ENCODE measurements at regions of chr22 and their contacts with region 1.

Region 1: DNA sequence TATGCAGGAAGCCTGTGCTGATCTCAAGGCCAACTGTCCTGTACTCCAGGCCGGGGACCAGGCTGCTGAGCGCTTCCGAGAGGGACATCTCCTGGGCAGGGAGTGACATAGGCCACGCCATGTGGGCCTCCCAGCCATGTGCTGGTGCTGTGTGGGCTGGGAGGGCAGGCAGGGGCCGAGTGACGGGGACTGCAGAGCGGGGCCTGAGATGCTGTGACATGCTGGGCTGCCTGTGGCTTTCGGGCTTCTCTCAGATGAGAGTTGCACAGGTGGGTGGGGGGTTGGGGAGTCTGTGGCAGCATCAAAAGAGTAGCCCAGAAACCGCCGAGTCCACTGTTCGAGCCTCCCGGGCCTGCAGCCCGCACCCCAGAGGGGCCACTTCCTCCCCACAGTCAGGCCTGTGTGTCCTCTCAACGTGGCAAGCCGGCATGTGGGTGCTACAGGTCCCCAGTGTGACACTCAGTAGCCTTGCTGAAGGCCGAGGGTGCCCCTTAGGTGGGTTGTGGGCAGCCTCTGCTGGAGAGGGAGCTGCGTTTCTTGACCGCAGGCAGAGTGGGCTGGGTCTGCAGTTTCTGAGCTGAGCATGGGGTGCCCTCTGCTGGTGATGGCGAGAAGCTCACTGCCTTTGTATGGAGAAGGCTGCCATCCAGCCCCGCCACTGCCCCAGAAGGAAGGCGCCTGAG is 101.2 kb downstream of the BCR start:
- DNase-seq: peak; percentile 88 to 93
- H3K4me3 ChIP-seq: no peak overlapping the region
- H3K27ac ChIP-seq: peak overlapping the region; percentile 42 to 87 (median 80)
- H3K4me1 ChIP-seq: peaks cover 30 to 67% (median 49%) of the 10 kb centered on the region in 4 donors
- H3K27me3 ChIP-seq: no peaks in the 10 kb centered on the region
- CTCF ChIP-seq: peak in 6 of 7 experiments; percentile 9 to 97 (median 92)
- EP300 ChIP-seq: no peak
- POLR2A ChIP-seq: no peak

Region 2: GRCh38 chr22:23178512-23179254 is 102.9 kb before region 1 on chr22:
- intact Hi-C with region 1: loop called (anchors 5 kb)
- DNase-seq: peak; percentile 75 to 89
- H3K4me3 ChIP-seq: no peak overlapping the region
- H3K27ac ChIP-seq: peak overlapping the region in 4 of 5 donors; percentile 81 to 90 (median 86)
- H3K4me1 ChIP-seq: peaks cover 38 to 59% (median 53%) of the 10 kb centered on the region in 4 donors
- H3K27me3 ChIP-seq: no peaks in the 10 kb centered on the region
- CTCF ChIP-seq: peak in 6 of 7 experiments; percentile 80 to 97 (median 94)
- EP300 ChIP-seq: no peak
- POLR2A ChIP-seq: no peak

Region 3: DNA sequence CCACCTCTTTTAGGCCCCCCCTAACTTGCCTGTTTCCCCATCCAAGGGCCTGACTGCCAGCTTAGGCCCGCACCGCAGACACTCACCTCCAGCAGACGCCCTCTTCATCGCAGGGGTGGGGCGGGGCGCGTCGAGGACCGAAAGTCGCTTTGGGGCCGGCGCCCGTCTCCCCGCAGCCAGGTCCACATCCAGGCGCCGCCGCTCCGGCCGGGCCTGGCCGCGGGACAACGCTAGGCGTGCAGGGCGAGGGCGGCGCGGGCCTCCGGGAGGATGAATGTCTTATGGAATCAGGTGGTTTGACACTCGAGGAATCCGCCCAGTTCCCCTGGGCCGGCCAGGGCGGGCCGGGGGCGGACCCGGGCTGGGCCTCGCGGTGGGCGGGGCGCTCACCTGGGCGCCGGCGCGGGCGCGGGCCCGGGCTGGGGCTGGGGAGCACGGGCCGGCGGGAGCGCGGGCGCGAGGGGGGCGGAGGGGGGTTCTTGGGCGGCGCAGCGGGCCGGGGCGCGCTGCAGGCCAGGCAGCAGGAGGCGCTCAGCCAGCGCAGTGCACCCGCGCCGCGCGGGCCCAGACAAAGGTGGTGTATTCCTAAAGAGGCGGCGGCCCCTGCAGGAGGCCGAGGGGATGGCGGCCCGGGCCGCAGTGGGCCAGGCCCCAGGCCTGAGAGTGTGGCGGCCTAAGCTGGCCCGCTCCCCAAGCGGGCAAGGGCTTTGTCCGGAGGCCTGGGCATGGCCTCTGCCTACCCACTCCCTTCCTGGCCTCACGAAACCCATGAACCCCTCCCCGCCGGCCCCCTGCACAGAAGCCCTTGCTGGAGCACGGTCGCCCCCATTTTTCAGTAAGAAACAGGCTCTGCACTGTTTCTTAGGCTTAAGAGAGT is 121.0 kb after region 1 on chr22:
- intact Hi-C with region 1: no loop called
- DNase-seq: peak; percentile 75 to 93
- H3K4me3 ChIP-seq: peak overlapping the region; percentile 42 to 54 (median 46)
- H3K27ac ChIP-seq: peak overlapping the region in 2 of 5 donors; percentile 10 to 58
- H3K4me1 ChIP-seq: peaks cover 0 to 13% (median 12%) of the 10 kb centered on the region in 4 donors
- H3K27me3 ChIP-seq: peaks cover 0 to 30% (median 0%) of the 10 kb centered on the region in 3 donors
- CTCF ChIP-seq: peak in 5 of 7 experiments; percentile 35 to 60 (median 50)
- EP300 ChIP-seq: no peak
- POLR2A ChIP-seq: no peak

Measured in stomach (tissue), 19 donors.